Posterior vena cava (tissue), 2 donors: ENCODE measurements at regions of chrX and their contacts with region 1.

Region 1: GRCh38 chrX:20011608-20012007 is 20.7 kb upstream of the BCLAF3 start:
- DNase-seq: no peak

Region 2: GRCh38 chrX:20149326-20149725 is 137.7 kb after region 1 on chrX:
- intact Hi-C with region 1: loop called in 1 of 2 experiments (anchors 2 kb)
- DNase-seq: no peak